ENCODE measurements at regions of chr2 and their contacts with region 1.

Region 1: DNA sequence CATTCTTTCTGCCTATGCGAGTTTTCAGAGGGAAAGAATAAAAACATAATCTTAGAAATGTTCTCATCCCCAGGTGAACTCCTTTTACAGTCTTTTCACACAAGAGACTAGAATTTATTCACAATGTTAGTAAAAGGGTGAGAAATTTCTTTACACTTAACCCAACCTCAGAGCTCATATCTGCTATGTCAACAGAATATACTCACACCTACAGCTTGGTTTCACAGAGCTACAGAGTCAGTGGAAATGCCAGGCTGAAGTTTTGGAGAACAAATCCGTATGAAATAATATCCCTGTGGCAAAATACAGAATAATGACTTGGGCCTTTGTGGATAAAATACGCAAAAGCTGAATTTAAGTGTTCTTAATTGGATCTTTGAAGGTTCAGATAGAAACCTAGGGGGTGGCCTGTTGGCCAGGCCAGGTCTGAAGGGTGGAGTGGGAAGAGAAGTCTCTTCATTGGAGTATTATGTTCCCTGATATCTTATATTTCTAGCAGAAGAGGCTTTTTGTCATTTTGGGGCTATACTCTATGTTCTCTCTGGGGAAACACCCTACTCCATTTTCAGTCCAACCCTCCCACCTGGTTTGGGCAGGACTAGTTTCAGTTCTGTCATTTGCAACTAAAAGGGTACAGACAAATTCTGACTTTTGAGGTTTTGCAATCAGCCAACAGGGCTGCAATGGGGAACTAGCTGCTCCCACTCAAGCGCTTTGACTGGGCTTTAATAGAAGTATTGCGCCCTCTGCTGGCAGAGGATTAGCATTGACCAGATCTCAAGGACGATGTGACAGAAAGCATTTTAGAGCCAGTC is 25.7 kb downstream of the FBXO48 start:
- DNase-seq: peak; percentile 94
- H3K4me3 Mint-ChIP-seq: peak overlapping the region; percentile 49
- H3K27ac Mint-ChIP-seq: peak overlapping the region; percentile 46
- H3K4me1 Mint-ChIP-seq: peaks cover 23% of the 10 kb centered on the region
- H3K27me3 Mint-ChIP-seq: peaks cover 17% of the 10 kb centered on the region

Region 2: DNA sequence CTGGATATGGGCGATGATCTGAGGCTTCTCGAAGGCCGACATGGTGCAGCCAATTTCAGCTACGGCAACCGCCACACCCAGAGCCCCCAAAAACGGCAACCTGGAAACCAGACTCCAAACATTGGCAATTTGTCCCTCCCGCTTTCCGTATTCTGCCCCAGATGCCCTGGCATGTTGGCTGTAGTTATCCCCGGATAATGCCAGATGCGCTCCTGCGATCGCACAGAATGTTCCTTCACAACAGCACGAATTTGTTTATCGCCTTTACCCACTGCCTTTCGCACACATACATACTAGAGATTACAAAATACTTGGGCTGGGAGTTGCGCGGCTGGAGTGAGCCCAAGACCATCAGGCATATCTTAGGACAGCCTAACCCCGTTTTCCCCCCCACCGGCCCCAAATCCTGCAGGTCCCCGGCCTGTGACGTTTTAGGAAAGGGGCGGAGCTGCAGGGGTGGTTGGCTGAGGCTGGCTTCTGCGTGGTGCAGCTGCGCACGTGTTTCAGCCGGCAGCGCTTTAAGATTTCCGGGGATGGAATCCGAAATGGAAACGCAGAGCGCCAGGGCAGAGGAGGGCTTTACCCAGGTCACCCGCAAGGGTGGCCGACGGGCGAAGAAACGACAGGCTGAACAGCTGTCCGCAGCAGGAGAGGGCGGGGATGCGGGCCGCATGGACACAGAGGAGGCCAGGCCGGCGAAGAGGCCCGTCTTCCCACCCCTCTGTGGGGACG is 283.8 kb before region 1 on chr2 and contains the start of gene PNO1:
- intact Hi-C with region 1: loop called (anchors 10 kb)
- DNase-seq: peak; percentile 99
- H3K4me3 Mint-ChIP-seq: peak within 1 kb of the TSS; percentile 98
- H3K27ac Mint-ChIP-seq: peak within 1 kb of the TSS; percentile 99
- H3K4me1 Mint-ChIP-seq: peaks cover 26% of the 10 kb centered on the region
- H3K27me3 Mint-ChIP-seq: no peaks in the 10 kb centered on the region
- total RNA-seq, gene PNO1: 35.4 and 38.4 TPM in 2 replicates

Region 3: DNA sequence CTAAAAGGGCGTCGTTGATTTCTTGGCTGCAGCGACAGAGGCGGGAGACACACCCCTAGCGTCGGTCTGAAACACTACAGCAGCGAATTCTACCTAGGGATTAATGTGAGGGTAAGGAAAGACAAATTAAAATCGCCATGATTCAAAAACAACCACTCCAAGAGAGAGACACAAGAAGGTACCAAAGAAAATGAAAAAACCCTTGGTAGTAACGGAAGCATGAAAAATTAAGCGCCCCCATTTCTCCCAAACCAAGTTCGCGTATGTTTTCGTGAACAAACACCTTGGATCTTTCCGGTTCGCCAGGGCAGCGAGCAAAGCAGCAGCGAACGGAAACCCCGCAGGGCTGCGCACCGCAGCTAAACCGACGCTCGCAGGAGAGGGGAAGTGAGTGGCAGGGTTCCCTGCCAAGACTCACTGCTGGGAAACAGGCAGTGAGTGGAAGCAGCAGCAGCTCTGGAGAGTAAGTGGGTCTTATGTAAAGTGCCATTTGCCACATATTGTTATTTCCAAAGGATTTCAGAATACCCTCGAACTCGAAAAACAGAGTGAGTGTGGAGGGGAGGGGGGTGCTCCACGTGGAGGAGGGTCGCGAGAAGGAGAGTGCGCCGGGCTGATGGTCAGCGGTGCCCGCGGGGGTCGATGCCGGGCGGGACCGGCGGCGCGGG is 190.1 kb before region 1 on chr2:
- intact Hi-C with region 1: loop called (anchors 5 kb)
- DNase-seq: peak; percentile 92
- H3K4me3 Mint-ChIP-seq: peak overlapping the region; percentile 92
- H3K27ac Mint-ChIP-seq: peak overlapping the region; percentile 99
- H3K4me1 Mint-ChIP-seq: peaks cover 37% of the 10 kb centered on the region
- H3K27me3 Mint-ChIP-seq: peaks cover 4% of the 10 kb centered on the region

Region 4: DNA sequence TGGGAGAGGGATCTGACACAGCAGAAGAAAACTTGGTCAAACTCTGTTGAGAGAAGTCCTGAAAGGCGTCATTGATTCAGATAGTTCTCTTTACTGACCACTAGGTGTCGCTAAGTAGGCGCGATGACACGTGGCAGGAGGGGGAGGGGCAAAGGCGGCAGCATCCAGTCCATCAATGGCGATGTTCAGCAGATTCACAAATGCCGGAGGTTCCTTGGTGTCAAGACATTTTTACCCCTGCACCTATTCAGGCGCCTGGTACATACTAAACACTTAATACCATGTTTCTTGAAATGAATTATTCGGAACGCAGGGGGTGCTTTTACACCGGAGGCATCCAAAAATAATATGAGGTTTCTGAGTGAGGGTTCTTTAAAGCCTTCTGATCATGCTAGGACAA is 79.3 kb before region 1 on chr2:
- intact Hi-C with region 1: loop called (anchors 1 kb)
- DNase-seq: peak; percentile 92
- H3K4me3 Mint-ChIP-seq: peak overlapping the region; percentile 30
- H3K27ac Mint-ChIP-seq: no peak overlapping the region
- H3K4me1 Mint-ChIP-seq: peaks cover 15% of the 10 kb centered on the region
- H3K27me3 Mint-ChIP-seq: peaks cover 20% of the 10 kb centered on the region

Region 5: DNA sequence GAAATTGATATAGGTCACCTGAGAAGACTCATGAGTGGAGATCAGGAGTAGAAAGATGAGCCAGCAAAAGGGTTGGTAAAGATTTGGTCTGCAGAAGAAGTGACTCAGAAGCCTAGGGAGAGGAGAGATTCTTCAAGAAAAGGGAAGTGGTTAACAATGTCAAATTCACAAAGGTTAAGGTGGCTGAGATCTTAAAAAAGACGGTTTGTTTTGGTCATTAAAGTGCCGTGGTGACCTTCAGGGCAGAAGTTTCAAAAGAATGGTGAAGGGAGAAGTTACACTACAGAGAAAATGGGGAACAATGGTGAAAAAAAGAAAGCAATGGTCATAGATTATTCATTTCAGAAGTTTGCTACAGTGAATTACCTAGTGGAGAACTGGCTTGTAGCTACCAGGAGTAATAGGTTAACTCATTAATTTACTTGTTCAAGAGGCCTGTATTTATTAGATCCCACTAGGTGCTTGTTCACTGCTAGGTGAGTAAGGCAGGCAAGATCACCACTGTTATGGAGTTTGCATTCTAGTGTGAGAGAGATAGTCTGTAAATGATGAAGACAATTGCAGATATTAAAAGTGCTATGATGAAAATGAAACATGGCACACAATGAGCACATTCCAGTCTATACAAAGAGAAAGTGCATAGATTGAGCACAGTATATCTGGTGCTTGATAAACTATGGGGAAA is 17.3 kb before region 1 on chr2:
- intact Hi-C with region 1: loop called (anchors 1 kb)
- DNase-seq: peak; percentile 64
- H3K4me3 Mint-ChIP-seq: no peak overlapping the region
- H3K27ac Mint-ChIP-seq: no peak overlapping the region
- H3K4me1 Mint-ChIP-seq: peaks cover 3% of the 10 kb centered on the region
- H3K27me3 Mint-ChIP-seq: peaks cover 12% of the 10 kb centered on the region

Region 6: DNA sequence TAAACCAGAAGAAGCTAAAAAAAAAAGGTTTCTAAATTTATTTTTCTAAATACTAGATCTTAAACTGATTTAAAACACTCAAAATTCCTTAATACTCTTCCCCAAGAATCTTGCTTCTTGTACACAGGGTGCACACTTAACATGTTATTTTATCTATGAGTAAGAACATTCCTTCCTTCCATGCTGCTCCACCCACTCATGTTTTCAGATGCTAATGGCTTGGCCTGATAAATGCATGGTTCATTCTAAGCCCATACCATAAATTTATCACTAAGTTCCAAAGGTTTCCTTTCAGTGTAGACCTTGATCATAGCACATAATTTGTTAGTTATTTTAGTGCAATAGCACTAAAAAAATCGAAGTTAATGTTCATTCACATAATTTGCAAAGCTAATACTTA is 17.6 kb after region 1 on chr2:
- intact Hi-C with region 1: no loop called
- DNase-seq: no peak
- H3K4me3 Mint-ChIP-seq: no peak overlapping the region
- H3K27ac Mint-ChIP-seq: no peak overlapping the region
- H3K4me1 Mint-ChIP-seq: peaks cover 5% of the 10 kb centered on the region
- H3K27me3 Mint-ChIP-seq: no peaks in the 10 kb centered on the region

Region 7: GRCh38 chr2:68589963-68590362 is 148.6 kb after region 1 on chr2:
- intact Hi-C with region 1: no loop called
- DNase-seq: no peak
- H3K4me3 Mint-ChIP-seq: no peak overlapping the region
- H3K27ac Mint-ChIP-seq: no peak overlapping the region
- H3K4me1 Mint-ChIP-seq: peaks cover 3% of the 10 kb centered on the region
- H3K27me3 Mint-ChIP-seq: peaks cover 2% of the 10 kb centered on the region